Activated naive CD4-positive, alpha-beta T cell treated with anti-CD3 and anti-CD28 coated beads for 36 hours (primary cell): ENCODE measurements at regions of chr3 and their contacts with region 1.

Region 1: DNA sequence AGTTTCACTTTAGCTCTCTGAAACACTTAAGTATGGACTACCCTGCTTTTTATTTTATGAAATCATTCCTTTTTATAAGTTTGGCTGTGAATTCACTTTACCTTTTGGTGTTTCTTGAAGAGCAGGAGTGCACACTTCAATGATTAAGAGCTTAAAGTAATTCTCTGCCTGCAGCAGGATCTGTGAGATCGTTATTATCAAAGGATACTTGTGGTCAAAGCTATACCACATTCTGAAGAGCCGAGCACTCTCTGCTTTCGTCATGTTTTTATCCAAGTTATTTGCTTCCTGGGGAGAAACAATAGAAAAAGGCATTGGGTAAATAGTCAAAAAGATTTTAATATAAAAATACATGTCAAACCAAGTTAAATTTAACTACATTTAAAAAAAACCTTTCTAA is 243.7 kb downstream of the CHST2 start:
- DNase-seq: no peak
- H3K4me3 Mint-ChIP-seq: no peak overlapping the region
- H3K27ac Mint-ChIP-seq: no peak overlapping the region
- H3K4me1 Mint-ChIP-seq: peaks cover 32% of the 10 kb centered on the region
- H3K27me3 Mint-ChIP-seq: no peaks in the 10 kb centered on the region

Region 2: DNA sequence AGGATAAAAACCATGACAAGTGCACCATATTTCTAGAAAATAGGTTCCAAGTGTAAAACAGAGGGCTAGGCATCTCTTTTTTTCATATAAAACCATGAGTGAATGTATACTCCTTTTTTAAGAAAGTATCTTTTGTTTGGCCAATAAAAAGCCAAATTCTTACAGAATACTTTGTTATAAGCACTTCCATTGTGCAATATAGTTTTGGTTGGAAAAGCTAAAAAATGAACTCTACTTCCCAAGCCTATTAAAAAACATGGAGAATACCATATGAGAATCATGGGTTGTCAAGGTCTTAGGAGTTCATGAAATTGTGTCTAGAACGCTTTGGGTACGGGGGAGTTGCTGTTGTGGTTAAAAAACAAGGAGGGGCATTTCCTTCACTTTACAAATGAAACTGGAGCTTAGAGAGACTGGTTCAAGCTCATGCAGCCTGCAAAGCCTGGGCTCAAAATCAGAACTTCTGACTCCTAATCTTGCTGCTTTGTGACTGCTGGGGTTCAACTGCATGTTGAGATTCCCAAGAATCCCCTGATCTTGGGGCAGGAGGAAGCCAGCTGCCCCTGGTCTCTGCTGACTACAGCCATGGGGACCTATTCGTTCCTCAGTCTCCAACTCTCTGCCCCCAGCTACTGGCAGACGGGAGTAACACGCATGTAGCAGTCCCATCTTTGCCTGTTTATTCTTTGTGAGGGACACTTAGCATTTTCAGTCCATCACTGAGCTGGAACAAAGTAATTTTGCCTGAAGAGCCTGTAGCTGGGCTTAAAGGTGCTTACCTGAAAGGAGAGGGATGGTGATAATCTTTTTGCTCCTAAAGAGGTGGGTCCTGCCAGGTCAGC is 14.6 kb before region 1 on chr3:
- CTCF ChIA-PET with region 1: interaction called, 4 read pairs
- intact Hi-C with region 1: loop called (anchors 2 kb)
- DNase-seq: no peak
- H3K4me3 Mint-ChIP-seq: no peak overlapping the region
- H3K27ac Mint-ChIP-seq: no peak overlapping the region
- H3K4me1 Mint-ChIP-seq: peaks cover 35% of the 10 kb centered on the region
- H3K27me3 Mint-ChIP-seq: no peaks in the 10 kb centered on the region